ENCODE measurements at regions of chr3 and their contacts with region 1.

Region 1: DNA sequence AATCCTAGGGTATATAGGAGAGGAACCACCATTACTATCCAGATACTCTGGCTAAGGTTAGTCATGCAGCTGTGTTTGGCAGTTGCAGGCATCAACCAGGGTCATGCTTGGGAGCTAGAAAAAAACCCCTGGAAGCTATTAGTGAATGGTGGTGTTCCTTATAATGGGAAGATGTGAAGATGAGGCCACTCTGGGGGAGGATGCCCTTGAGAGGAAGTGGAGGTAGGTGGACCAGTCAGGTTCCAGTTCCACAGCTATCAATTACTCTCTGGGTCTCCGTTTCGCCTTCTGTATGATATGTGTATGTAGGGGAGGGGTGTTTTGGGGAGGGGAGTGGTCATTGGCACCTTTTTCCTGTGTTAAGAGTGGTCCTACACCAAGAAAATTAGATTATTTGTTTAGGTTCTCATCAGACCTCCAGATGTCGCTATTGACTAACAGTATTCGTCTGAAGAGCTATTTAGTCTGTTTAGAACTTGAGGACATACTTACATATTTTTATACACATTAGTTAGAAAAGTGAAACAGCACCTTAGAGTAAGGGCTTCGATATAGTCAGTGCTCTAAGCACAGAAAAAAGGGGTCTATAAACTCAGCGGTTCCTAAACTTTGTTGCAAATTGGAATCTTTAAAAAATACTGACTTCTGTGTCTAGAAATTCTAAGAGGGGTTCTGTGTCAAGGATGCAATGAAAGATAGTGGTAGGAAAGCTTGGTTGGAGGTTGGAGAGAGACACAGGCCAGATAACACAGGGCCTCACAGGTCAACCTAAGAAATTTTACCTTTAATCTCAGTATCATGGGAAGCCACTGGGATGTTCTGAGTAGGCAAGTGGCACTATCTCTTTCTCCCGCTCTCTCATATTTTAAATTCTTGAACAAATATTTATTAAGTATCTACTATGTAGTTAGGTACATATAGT is 9.1 kb upstream of the HPS3 start:
- DNase-seq: no peak
- H3K4me3 ChIP-seq: no peak overlapping the region
- CTCF ChIP-seq: peak; percentile 38

Region 2: DNA sequence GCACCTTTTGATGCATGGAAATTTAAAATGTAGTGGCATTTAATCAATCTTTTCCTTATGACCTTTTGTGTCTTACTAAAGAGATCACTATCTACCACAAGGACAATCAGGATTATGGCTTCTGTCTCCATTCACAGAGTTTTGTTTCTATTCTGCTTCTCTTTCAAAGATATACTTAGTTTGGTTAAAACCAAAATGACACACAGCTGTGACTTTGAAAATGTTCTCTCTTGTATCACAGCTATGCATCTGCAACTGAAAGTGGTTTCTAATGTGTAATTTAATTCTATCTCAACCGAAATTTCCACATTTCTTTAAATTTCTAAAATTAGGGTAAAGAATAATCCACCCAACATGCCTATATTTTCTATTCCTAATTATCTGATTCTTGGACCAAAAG is 61.7 kb before region 1 on chr3:
- CTCF ChIA-PET with region 1: no interaction called
- POLR2A ChIA-PET with region 1: no interaction called
- DNase-seq: no peak
- H3K4me3 ChIP-seq: no peak overlapping the region
- CTCF ChIP-seq: no peak

Region 3: GRCh38 chr3:149104516-149104915 is 15.8 kb before region 1 on chr3:
- CTCF ChIA-PET with region 1: interaction called, 23 read pairs
- POLR2A ChIA-PET with region 1: no interaction called
- DNase-seq: no peak
- H3K4me3 ChIP-seq: no peak overlapping the region
- CTCF ChIP-seq: no peak

Region 4: DNA sequence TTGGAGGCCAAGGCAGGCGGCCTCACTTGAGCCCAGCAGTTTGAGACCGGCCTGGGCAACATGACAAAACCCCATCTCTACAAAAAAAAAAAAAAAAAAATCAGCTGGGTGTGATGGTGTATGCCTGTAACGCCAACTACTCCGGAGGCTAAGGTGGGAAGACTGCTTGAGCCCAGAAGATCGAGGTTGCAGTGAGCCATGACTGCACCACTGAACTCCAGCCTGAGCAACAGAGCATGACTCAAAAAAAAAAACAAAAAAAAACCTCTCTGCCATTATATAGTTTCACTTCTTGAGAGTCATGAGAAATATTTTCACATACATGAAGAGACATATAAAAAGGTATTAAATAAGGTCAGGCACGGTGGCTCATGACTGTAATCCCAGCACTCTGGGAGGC is 147.3 kb after region 1 on chr3:
- CTCF ChIA-PET with region 1: interaction called, 255 read pairs
- POLR2A ChIA-PET with region 1: no interaction called
- DNase-seq: no peak
- H3K4me3 ChIP-seq: no peak overlapping the region
- CTCF ChIP-seq: no peak

Region 5: GRCh38 chr3:149299938-149300791 is 179.9 kb after region 1 on chr3:
- CTCF ChIA-PET with region 1: interaction called, 13 read pairs
- POLR2A ChIA-PET with region 1: no interaction called
- DNase-seq: peak; percentile 87
- H3K4me3 ChIP-seq: no peak overlapping the region
- CTCF ChIP-seq: no peak

Region 6: GRCh38 chr3:149339931-149340309 is 219.6 kb after region 1 on chr3:
- CTCF ChIA-PET with region 1: interaction called, 22 read pairs
- POLR2A ChIA-PET with region 1: no interaction called
- DNase-seq: peak; percentile 76
- H3K4me3 ChIP-seq: no peak overlapping the region
- CTCF ChIP-seq: no peak

Region 7: GRCh38 chr3:149473357-149474249 is 353.3 kb after region 1 on chr3:
- CTCF ChIA-PET with region 1: interaction called, 15 read pairs
- POLR2A ChIA-PET with region 1: no interaction called
- DNase-seq: peak; percentile 55
- H3K4me3 ChIP-seq: no peak overlapping the region
- CTCF ChIP-seq: no peak

Region 8: GRCh38 chr3:149487598-149488197 is 367.4 kb after region 1 on chr3:
- CTCF ChIA-PET with region 1: interaction called, 15 read pairs
- POLR2A ChIA-PET with region 1: no interaction called
- DNase-seq: no peak
- H3K4me3 ChIP-seq: no peak overlapping the region
- CTCF ChIP-seq: no peak